GM12878 (cell line): ENCODE measurements at regions of chrX and their contacts with region 1.

Region 1: DNA sequence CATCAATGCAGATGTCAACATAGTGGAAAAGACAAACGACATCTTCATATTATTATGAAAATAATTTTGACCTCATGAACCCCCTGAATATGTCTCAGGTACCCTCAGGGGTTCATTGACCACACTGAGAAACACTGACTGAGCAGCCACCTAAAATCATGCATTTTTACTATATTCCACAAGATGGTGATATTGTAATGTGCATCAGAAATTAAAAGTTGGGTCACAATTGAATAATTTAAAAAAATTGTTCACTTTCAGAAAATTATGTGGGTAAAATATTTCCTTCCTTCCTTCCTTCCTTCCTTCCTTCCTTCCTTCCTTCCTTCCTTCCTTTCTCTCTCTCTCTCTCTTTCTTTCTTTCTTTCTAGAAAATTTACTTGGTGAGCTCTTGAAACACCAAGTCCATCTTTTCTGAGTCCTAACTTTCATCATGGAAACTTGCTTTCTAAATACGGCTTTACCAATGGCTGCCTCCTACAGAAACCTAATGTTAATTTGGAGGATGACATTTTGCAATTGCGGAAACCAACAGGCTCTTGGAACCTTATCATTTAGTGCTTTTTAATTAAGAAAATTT is 103.6 kb downstream of the RTL3 start:
- DNase-seq: no peak
- ATAC-seq: peak; percentile 48; the same call in 2 of the 3 replicates
- H3K4me3 ChIP-seq: no peak overlapping the region
- H3K27ac ChIP-seq: no peak overlapping the region
- H3K4me1 ChIP-seq: no peaks in the 10 kb centered on the region
- H3K27me3 ChIP-seq: no peaks in the 10 kb centered on the region
- CTCF ChIP-seq: peak; percentile 28 to 58 (median 49); a peak in 4 of 6 replicates
- EP300 ChIP-seq: no peak
- POLR2A ChIP-seq: no peak
- RAD21 ChIP-seq: peak; percentile 79

Region 2: DNA sequence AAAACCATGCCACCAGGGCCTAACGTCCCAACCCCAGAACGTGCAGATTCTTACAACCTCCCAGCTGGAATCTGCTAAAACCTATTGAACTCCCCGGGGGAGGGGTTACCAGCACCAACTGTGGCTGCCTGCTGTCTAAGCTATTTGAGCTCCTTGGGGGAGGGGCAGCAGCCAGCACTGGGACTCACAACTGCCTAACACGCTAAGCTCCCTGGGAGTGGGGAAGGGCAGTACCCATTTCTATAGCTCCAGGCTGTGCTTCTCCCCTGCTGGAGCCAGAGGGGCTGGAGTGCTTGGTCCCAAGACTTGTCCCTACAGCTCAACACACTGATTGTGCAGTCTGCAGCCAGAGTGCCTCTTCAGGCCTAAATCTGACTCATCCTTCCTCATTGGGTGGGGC is 1568.1 kb before region 1 on chrX:
- CTCF ChIA-PET with region 1: no interaction called
- POLR2A ChIA-PET with region 1: no interaction called
- RAD21 ChIA-PET with region 1: no interaction called
- SMC1A ChIA-PET with region 1: no interaction called
- in situ Hi-C with region 1: no loop called
- intact Hi-C with region 1: no loop called
- DNase-seq: no peak
- ATAC-seq: no peak
- H3K4me3 ChIP-seq: no peak overlapping the region
- H3K27ac ChIP-seq: no peak overlapping the region
- H3K4me1 ChIP-seq: no peaks in the 10 kb centered on the region
- H3K27me3 ChIP-seq: no peaks in the 10 kb centered on the region
- CTCF ChIP-seq: no peak
- EP300 ChIP-seq: no peak
- POLR2A ChIP-seq: no peak
- RAD21 ChIP-seq: no peak

Region 3: DNA sequence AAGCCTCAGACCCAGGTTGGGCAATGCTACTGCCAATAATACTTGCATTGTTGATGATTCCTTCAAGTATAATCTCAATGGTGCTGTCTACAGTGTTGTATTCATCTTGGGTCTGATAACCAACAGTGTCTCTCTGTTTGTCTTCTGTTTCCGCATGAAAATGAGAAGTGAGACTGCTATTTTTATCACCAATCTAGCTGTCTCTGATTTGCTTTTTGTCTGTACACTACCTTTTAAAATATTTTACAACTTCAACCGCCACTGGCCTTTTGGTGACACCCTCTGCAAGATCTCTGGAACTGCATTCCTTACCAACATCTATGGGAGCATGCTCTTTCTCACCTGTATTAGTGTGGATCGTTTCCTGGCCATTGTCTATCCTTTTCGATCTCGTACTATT is 199.4 kb after region 1 on chrX:
- CTCF ChIA-PET with region 1: interaction called, 3 read pairs
- POLR2A ChIA-PET with region 1: no interaction called
- RAD21 ChIA-PET with region 1: interaction called, 6 read pairs
- SMC1A ChIA-PET with region 1: interaction called, 6 read pairs
- in situ Hi-C with region 1: no loop called
- intact Hi-C with region 1: loop called (anchors 1 kb)
- DNase-seq: peak; percentile 49
- ATAC-seq: peak; percentile 94
- H3K4me3 ChIP-seq: no peak overlapping the region
- H3K27ac ChIP-seq: no peak overlapping the region
- H3K4me1 ChIP-seq: peaks cover 20% of the 10 kb centered on the region
- H3K27me3 ChIP-seq: no peaks in the 10 kb centered on the region
- CTCF ChIP-seq: peak; percentile 15 to 44 (median 32); a peak in 4 of 6 replicates
- EP300 ChIP-seq: no peak
- POLR2A ChIP-seq: no peak
- RAD21 ChIP-seq: peak; percentile 79

Region 4: DNA sequence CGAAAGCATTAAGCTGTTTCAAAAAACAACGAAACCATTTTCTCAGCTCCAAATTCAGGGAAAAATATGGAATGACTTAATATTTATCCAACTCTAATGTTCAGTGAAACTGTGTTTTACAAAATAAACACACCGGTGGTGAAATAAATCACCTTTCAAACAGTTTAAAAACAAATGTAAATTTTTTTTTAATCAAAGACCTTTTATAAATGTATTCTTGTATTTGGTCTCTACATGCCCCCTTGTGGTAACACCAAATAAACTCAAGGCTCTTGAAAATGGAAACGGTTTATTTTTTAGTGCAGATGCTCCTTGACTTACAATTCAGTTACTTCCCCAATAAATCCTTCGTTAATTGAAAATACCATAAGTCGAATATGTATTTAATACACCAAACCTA is 857.5 kb after region 1 on chrX:
- CTCF ChIA-PET with region 1: interaction called, 9 read pairs
- POLR2A ChIA-PET with region 1: no interaction called
- RAD21 ChIA-PET with region 1: interaction called, 3 read pairs
- SMC1A ChIA-PET with region 1: interaction called, 14 read pairs
- in situ Hi-C with region 1: no loop called
- intact Hi-C with region 1: loop called (anchors 5 kb)
- DNase-seq: no peak
- ATAC-seq: no peak
- H3K4me3 ChIP-seq: no peak overlapping the region
- H3K27ac ChIP-seq: no peak overlapping the region
- H3K4me1 ChIP-seq: no peaks in the 10 kb centered on the region
- H3K27me3 ChIP-seq: no peaks in the 10 kb centered on the region
- CTCF ChIP-seq: peak in 2 of 3 experiments; percentile 14 to 34; a peak in 4 of 6 replicates
- EP300 ChIP-seq: no peak
- POLR2A ChIP-seq: no peak
- RAD21 ChIP-seq: peak; percentile 62

Region 5: GRCh38 chrX:79452881-79453280 is 897.4 kb after region 1 on chrX:
- CTCF ChIA-PET with region 1: interaction called, 8 read pairs
- POLR2A ChIA-PET with region 1: interaction called, 3 read pairs
- RAD21 ChIA-PET with region 1: interaction called, 4 read pairs
- SMC1A ChIA-PET with region 1: interaction called, 8 read pairs
- in situ Hi-C with region 1: loop called (anchors 25 kb)
- intact Hi-C with region 1: loop called (anchors 2 kb)
- DNase-seq: no peak
- ATAC-seq: peak; percentile 64
- H3K4me3 ChIP-seq: no peak overlapping the region
- H3K27ac ChIP-seq: no peak overlapping the region
- H3K4me1 ChIP-seq: no peaks in the 10 kb centered on the region
- H3K27me3 ChIP-seq: no peaks in the 10 kb centered on the region
- CTCF ChIP-seq: no peak
- EP300 ChIP-seq: no peak
- POLR2A ChIP-seq: no peak
- RAD21 ChIP-seq: no peak